ENCODE measurements at regions of chr3 and their contacts with region 1.

Region 1: DNA sequence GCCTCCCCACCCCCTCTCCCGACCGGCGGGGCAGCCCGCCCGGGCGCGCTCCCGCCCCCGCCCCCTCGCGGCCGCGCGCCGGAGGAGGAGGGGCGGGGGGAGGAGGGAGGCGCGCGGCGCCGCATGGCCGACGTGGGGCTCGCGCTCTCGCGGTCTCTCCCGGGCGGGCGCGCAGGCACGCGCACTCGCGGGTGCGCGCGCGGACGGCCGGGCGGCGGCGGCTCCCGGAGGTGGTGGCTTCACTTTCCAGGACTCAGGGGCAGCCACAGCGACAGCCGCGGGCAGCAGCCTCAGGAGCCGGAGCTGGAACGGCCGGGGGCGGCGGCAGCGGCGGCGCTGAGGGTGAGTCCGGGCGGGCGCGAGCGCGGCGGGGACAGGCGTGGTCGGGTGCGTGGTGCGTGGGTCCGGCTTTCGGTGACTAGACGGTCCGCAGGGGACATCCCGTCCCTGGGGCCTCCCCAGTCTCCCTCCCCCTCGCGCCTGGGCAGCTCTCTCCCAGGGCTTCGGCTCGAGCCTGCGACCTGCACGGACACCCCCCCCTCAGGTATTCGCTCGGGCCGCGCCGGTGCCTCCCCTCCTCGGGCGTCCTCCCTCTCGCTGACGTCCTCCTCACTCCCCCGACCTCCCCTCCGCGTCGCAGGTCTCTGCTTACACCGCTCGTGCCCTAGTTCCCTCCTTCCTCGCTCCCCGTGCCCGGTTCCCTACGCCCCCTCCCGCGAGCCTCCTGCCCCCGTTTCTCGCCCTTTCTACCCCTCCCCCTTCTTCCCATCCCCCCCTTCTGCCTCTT is at the start of gene UBE2E2:
- DNase-seq: peak; percentile 82
- ATAC-seq: peak; percentile 73
- H3K4me3 Mint-ChIP-seq: peak within 1 kb of the TSS; percentile 97
- H3K27ac Mint-ChIP-seq: peak within 1 kb of the TSS; percentile 91
- H3K4me1 Mint-ChIP-seq: peaks cover 40% of the 10 kb centered on the region
- H3K27me3 Mint-ChIP-seq: no peaks in the 10 kb centered on the region
- CTCF ChIP-seq: no peak
- total RNA-seq, gene UBE2E2: 47.0 and 48.5 TPM in 2 replicates

Region 2: GRCh38 chr3:23324745-23325144 is 121.6 kb after region 1 on chr3:
- CTCF ChIA-PET with region 1: no interaction called
- POLR2A ChIA-PET with region 1: no interaction called
- intact Hi-C with region 1: loop called (anchors 5 kb)
- DNase-seq: no peak
- ATAC-seq: peak; percentile 77
- H3K4me3 Mint-ChIP-seq: peak overlapping the region; percentile 55
- H3K27ac Mint-ChIP-seq: peak overlapping the region; percentile 46
- H3K4me1 Mint-ChIP-seq: peaks cover 60% of the 10 kb centered on the region
- H3K27me3 Mint-ChIP-seq: no peaks in the 10 kb centered on the region
- CTCF ChIP-seq: no peak

Region 3: DNA sequence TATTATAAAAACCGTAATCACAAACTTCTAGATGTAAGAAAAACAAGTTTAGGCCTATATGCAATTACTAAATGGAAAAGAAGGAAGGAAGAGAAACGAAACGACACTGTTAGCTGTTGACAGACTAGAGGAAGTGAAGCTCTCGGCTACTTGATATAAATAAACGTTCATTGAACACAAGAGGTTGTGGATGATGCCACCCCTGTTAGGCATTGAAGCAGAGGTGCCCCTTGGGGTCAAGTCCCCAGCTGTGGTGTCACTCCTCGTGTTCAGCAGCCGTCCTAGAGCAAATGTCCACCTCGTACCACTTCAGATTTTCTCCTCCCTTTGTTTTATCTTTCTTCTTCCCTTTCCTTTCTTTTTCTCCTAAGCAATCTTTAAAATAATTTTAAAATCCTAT is 456.2 kb after region 1 on chr3:
- CTCF ChIA-PET with region 1: no interaction called
- POLR2A ChIA-PET with region 1: no interaction called
- intact Hi-C with region 1: loop called (anchors 10 kb)
- DNase-seq: no peak
- ATAC-seq: peak; percentile 87
- H3K4me3 Mint-ChIP-seq: peak overlapping the region; percentile 63
- H3K27ac Mint-ChIP-seq: peak overlapping the region; percentile 82
- H3K4me1 Mint-ChIP-seq: peaks cover 78% of the 10 kb centered on the region
- H3K27me3 Mint-ChIP-seq: no peaks in the 10 kb centered on the region
- CTCF ChIP-seq: no peak

Region 4: GRCh38 chr3:23859016-23859743 is 656.1 kb after region 1 on chr3:
- CTCF ChIA-PET with region 1: no interaction called
- POLR2A ChIA-PET with region 1: no interaction called
- intact Hi-C with region 1: loop called (anchors 5 kb)
- DNase-seq: no peak
- ATAC-seq: no peak
- H3K4me3 Mint-ChIP-seq: no peak overlapping the region
- H3K27ac Mint-ChIP-seq: no peak overlapping the region
- H3K4me1 Mint-ChIP-seq: peaks cover 54% of the 10 kb centered on the region
- H3K27me3 Mint-ChIP-seq: no peaks in the 10 kb centered on the region
- CTCF ChIP-seq: no peak

Region 5: DNA sequence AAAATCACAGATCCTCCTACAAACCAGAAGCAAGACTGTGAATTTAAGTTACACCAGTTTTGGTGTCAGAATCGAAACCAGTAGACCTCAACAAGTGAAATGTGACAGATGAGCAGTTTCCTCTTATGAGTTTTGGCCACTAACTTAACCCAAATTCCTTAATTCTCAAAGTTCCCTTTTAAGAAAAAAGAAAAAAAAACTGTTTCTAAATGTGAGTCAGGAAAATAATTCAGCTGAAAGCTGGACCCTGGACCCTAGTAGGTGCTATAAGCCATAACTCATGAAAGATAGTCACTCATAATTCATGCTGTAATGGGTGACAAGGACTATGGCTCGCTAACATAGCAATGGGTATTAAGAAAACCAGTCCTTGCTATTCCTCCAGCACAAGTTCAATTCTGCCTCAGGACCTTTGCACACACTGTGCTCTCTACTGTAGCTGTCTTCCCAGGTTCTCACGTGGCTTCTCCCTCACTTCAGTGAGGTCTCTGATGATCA is 1300.6 kb after region 1 on chr3:
- CTCF ChIA-PET with region 1: no interaction called
- POLR2A ChIA-PET with region 1: no interaction called
- intact Hi-C with region 1: loop called (anchors 10 kb)
- DNase-seq: no peak
- ATAC-seq: peak; percentile 54
- H3K4me3 Mint-ChIP-seq: no peak overlapping the region
- H3K27ac Mint-ChIP-seq: peak overlapping the region; percentile 46
- H3K4me1 Mint-ChIP-seq: peaks cover 60% of the 10 kb centered on the region
- H3K27me3 Mint-ChIP-seq: peaks cover 2% of the 10 kb centered on the region
- CTCF ChIP-seq: no peak